Gastrocnemius medialis (tissue), 4 donors: ENCODE measurements at regions of chr14 and their contacts with region 1.

Region 1: DNA sequence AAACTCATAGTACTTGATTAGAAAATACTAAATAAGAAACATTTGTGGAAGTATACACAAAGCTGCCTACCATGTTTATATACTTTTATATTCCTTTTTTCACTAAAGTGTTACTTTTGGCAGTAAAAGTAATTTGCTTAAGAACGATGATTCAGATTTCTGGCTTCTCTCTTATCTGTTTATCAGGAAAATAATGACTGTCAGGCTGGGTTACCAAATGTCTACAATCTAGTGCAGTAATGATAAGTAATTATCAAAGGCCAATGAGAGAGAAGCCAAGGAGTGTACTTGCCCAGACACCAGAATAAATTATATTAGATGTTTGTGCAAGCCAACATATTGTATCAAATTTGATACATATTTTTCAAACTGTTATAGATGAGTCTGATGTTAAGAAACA is 113.4 kb downstream of the RALGAPA1 start:
- DNase-seq: no peak
- ATAC-seq: no peak
- H3K4me3 ChIP-seq: no peak overlapping the region
- H3K27ac ChIP-seq: no peak overlapping the region
- H3K4me1 ChIP-seq: no peaks in the 10 kb centered on the region
- H3K27me3 ChIP-seq: no peaks in the 10 kb centered on the region
- CTCF ChIP-seq: no peak
- POLR2A ChIP-seq: no peak

Region 2: DNA sequence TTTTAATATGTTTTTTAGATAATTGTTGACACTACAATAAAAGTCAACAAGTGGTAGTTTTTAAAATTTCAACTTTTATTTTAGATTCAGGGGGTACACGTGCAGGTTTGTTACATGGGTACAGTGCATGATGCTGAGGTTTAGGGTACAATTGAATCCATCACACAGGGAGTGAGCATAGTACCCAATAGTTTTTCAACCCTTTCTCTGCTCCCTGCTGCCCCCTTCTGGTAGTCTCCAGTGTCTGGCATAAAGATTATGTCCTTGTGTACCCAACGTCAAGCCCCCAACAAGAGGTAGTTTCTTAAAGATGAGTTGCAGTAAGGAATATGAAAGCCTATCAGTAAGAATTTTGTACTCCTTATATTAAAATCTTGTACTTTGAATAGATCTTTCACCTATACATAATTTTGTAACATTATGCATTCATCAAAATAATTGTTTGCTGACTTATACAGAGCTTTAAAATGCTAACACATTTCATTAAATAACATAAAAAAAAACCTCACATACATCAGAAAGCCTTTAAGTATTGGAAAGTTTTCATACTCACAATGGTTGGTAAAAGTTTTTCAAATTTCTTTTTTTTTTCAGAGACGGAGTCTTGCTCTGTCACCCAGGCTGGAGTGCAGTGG is 118.8 kb after region 1 on chr14:
- in situ Hi-C with region 1: no loop called
- intact Hi-C with region 1: loop called (anchors 10 kb)
- DNase-seq: no peak
- ATAC-seq: no peak
- H3K4me3 ChIP-seq: no peak overlapping the region
- H3K27ac ChIP-seq: no peak overlapping the region
- H3K4me1 ChIP-seq: no peaks in the 10 kb centered on the region
- H3K27me3 ChIP-seq: no peaks in the 10 kb centered on the region
- CTCF ChIP-seq: peak; percentile 27 to 69 (median 44)
- POLR2A ChIP-seq: no peak